Posterior vena cava (tissue), 2 donors: ENCODE measurements at regions of chr21 and their contacts with region 1.

Region 1: GRCh38 chr21:18403735-18404450 is at the start of gene TMPRSS15:
- DNase-seq: no peak
- total RNA-seq, gene TMPRSS15: not detected

Region 2: DNA sequence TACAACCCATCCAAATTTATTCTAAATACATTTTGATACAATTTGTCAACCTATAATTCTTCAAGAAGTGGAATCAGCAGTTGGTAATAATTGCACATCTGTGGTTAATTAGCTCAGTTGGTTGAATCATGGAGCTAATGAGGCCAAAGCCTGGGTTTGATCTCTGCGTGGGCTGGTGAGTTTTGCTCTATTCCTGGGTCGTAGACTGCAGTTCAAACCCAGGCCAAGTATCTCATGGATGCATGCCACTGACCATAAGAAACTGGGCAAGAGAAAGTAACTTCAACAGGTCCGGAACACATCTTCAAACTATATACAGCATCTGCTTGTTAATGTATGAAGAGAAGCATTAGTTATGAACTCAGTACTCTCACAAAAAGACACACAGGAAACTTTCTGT is 1894.4 kb before region 1 on chr21:
- intact Hi-C with region 1: loop called in 1 of 2 experiments (anchors 10 kb)
- DNase-seq: no peak

Region 3: DNA sequence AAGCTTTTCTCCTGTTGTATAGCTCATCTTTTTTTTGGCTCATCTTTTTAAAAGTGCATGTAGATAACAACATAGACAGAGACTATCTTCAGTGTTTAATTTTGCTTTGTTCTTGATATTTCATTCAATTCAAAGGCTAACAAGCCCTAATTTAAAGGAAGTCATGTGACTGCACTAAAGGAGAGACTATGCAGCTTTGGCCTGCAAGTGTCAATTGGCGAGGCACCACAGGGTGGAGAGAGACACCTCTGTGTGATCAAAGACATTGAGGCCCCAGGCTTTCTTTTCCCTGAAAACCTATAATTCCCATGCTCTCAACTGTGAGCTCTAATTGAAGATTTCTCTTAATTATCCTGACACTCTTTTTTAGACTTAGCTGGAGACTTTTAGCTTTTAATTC is 105.7 kb before region 1 on chr21:
- intact Hi-C with region 1: no loop called
- DNase-seq: no peak